Naive thymus-derived CD4-positive, alpha-beta T cell (primary cell): ENCODE measurements at regions of chr7 and their contacts with region 1.

Region 1: DNA sequence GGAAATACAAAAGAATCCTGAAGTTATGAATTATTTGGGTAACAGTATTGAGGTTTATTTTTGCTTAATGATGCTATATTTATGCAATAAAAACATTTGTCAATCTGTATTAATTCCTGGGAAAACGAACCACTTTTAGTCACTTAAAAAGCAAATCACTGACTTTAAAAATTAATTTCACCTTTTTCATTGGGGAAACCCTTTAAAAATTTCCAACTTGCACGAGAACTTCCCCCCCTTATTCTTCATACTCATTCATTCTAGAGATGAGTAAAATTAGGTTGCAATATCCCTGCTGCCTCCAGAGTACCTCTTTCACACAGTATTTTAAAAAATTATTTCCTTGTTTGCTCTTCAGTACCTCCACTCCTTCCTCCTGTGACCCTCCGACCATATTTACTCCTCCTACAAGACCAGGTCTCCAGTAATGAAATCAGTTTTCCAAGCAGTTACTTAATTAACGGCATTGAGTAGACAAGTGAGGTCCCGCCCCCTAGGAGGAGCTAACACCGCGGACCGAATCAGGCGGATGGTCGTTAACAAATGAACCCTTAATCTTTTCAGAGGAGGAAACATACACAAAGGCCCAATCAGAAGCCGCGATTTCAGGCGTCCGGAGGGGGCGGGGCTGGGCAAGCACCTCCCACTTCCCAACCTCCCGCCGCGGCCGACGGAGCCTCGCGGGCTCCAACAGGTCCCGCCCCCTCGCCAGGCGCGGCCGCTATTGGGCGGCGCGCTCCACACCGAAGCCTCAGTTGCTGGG is 465 bp upstream of the TRIM24 start:
- DNase-seq: peak; percentile 95 to 99 (median 98)
- ATAC-seq: peak; percentile 92
- H3K4me3 ChIP-seq: peak overlapping the region; percentile 35
- H3K4me3 Mint-ChIP-seq: peak overlapping the region; percentile 78 to 96 (median 87)
- H3K27ac ChIP-seq: peak overlapping the region; percentile 34
- H3K27ac Mint-ChIP-seq: peak overlapping the region; percentile 0 to 83 (median 61)
- H3K4me1 ChIP-seq: peaks cover 6 to 9% of the 10 kb centered on the region in 2 donors
- H3K4me1 Mint-ChIP-seq: peaks cover 14 to 38% (median 31%) of the 10 kb centered on the region in 7 donors
- H3K27me3 ChIP-seq: no peaks in the 10 kb centered on the region
- H3K27me3 Mint-ChIP-seq: peaks cover 0 to 2% (median 0%) of the 10 kb centered on the region in 5 donors

Region 2: GRCh38 chr7:137898839-137899721 is 560.5 kb before region 1 on chr7:
- CTCF ChIA-PET with region 1: no interaction called
- POLR2A ChIA-PET with region 1: no interaction called
- intact Hi-C with region 1: loop called in 1 of 2 experiments (anchors 5 kb)
- DNase-seq: peak; percentile 46 to 81 (median 68)
- ATAC-seq: peak; percentile 92
- H3K4me3 ChIP-seq: no peak overlapping the region
- H3K4me3 Mint-ChIP-seq: peak overlapping the region; percentile 51 to 82 (median 66)
- H3K27ac ChIP-seq: no peak overlapping the region
- H3K27ac Mint-ChIP-seq: peak overlapping the region in 8 of 9 donors; percentile 19 to 72 (median 62)
- H3K4me1 ChIP-seq: peaks cover 0 to 6% of the 10 kb centered on the region in 2 donors
- H3K4me1 Mint-ChIP-seq: peaks cover 10 to 36% (median 16%) of the 10 kb centered on the region in 7 donors
- H3K27me3 ChIP-seq: no peaks in the 10 kb centered on the region
- H3K27me3 Mint-ChIP-seq: no peaks in the 10 kb centered on the region

Region 3: DNA sequence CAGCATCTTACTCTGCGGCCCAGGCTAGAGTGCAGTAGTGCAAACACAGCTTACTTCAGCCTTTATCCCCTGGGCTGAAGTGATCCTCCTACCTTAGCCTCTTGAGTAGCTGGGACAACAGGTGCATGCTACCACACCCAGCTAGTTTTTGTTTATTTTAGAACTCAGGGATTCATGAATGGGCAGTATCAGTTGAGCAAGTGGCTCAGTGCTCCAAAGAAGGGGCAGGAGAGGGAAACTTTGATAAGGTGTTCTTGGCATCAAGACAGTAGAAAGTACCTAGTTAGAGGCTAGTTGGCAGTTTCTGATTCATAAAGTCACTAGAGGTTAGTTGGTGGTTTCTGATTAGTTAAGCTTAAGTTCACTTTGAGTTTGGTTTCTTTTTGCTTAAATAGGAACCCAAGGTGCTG is 18.9 kb after region 1 on chr7:
- CTCF ChIA-PET with region 1: no interaction called
- POLR2A ChIA-PET with region 1: interaction called, 3 read pairs
- intact Hi-C with region 1: loop called (anchors 2 kb)
- DNase-seq: no peak
- ATAC-seq: peak; percentile 26
- H3K4me3 ChIP-seq: no peak overlapping the region
- H3K4me3 Mint-ChIP-seq: peak overlapping the region in 3 of 10 donors; percentile 14 to 56 (median 26)
- H3K27ac ChIP-seq: no peak overlapping the region
- H3K27ac Mint-ChIP-seq: peak overlapping the region in 1 of 9 donors; percentile 63
- H3K4me1 ChIP-seq: peaks cover 9 to 11% of the 10 kb centered on the region in 2 donors
- H3K4me1 Mint-ChIP-seq: peaks cover 40 to 85% (median 76%) of the 10 kb centered on the region in 7 donors
- H3K27me3 ChIP-seq: no peaks in the 10 kb centered on the region
- H3K27me3 Mint-ChIP-seq: no peaks in the 10 kb centered on the region

Region 4: GRCh38 chr7:138556771-138557484 is 97.3 kb after region 1 on chr7:
- CTCF ChIA-PET with region 1: no interaction called
- POLR2A ChIA-PET with region 1: no interaction called
- intact Hi-C with region 1: loop called in 1 of 2 experiments (anchors 10 kb)
- DNase-seq: no peak
- ATAC-seq: no peak
- H3K4me3 ChIP-seq: no peak overlapping the region
- H3K4me3 Mint-ChIP-seq: no peak overlapping the region
- H3K27ac ChIP-seq: no peak overlapping the region
- H3K27ac Mint-ChIP-seq: no peak overlapping the region
- H3K4me1 ChIP-seq: no peaks in the 10 kb centered on the region
- H3K4me1 Mint-ChIP-seq: no peaks in the 10 kb centered on the region
- H3K27me3 ChIP-seq: no peaks in the 10 kb centered on the region
- H3K27me3 Mint-ChIP-seq: no peaks in the 10 kb centered on the region

Region 5: GRCh38 chr7:138738551-138739335 is 279.1 kb after region 1 on chr7:
- CTCF ChIA-PET with region 1: interaction called, 6 read pairs
- POLR2A ChIA-PET with region 1: interaction called, 4 read pairs
- intact Hi-C with region 1: loop called (anchors 1 to 2 kb)
- DNase-seq: peak; percentile 70 to 86 (median 80)
- ATAC-seq: peak; percentile 92
- H3K4me3 ChIP-seq: no peak overlapping the region
- H3K4me3 Mint-ChIP-seq: no peak overlapping the region
- H3K27ac ChIP-seq: no peak overlapping the region
- H3K27ac Mint-ChIP-seq: peak overlapping the region in 7 of 9 donors; percentile 1 to 83 (median 65)
- H3K4me1 ChIP-seq: no peaks in the 10 kb centered on the region
- H3K4me1 Mint-ChIP-seq: peaks cover 0 to 7% (median 4%) of the 10 kb centered on the region in 7 donors
- H3K27me3 ChIP-seq: no peaks in the 10 kb centered on the region
- H3K27me3 Mint-ChIP-seq: no peaks in the 10 kb centered on the region

Region 6: DNA sequence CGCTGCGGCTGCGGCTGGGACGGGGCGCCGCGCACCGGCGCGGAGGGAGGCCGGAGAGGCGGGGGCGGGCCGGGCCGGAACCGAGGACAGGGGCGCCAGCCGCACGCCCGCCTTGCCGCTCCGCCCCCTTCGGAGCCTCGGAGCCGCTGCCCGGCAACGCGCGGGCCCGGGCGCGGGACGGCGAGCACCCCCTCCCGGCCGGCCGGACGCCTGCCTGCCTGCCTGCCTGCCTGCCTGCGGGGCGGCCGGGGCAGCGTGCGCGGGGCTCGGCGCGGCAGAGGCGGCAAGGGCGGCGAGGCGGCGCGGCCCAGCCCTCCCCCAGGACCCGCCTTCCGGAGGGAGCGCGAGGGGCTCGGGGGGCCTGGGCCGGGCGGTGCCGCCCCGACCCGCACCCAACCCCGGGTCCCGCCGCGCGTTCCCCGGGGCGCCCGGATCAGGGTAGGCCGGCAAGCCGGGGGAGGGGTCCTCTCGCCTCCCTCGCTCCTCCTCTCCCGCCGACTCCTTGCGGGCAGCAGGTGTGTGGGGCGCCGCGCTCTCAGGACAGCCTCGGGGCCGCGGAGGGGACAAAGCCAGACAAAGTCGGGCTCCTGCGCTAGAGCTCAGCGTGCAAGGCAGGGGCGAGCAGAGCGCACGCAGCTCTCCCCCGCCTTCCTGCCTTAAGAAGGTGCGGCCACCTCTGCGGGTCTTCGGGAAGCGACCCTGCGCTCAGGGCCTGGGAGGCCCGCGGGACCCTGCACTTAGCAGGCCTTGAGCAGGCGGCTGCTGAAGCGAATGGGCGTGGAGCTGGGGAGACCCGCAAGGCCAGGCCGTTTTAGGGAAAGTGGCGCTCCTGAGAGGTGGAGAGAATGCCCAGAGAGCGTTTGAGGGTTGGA is 522.0 kb after region 1 on chr7 and contains the start of gene KIAA1549:
- CTCF ChIA-PET with region 1: no interaction called
- POLR2A ChIA-PET with region 1: no interaction called
- intact Hi-C with region 1: loop called in 1 of 2 experiments (anchors 2 kb)
- DNase-seq: peak in 8 of 9 donors; percentile 17 to 75 (median 26)
- ATAC-seq: peak; percentile 81
- H3K4me3 ChIP-seq: peak within 1 kb of the TSS; percentile 37
- H3K4me3 Mint-ChIP-seq: peak within 1 kb of the TSS; percentile 83 to 98 (median 90)
- H3K27ac ChIP-seq: no peak within 1 kb of the TSS
- H3K27ac Mint-ChIP-seq: peak within 1 kb of the TSS in 7 of 9 donors; percentile 12 to 82 (median 63)
- H3K4me1 ChIP-seq: peaks cover 5 to 6% of the 10 kb centered on the region in 2 donors
- H3K4me1 Mint-ChIP-seq: peaks cover 10 to 18% (median 13%) of the 10 kb centered on the region in 7 donors
- H3K27me3 ChIP-seq: peaks cover 10 to 13% of the 10 kb centered on the region in 2 donors
- H3K27me3 Mint-ChIP-seq: peaks cover 25 to 49% (median 35%) of the 10 kb centered on the region in 5 donors
- total RNA-seq, gene KIAA1549: 0.16 to 0.56 (median 0.25) TPM in 4 of 5 experiments, not detected in the other

Region 7: GRCh38 chr7:139359366-139360209 is 900.0 kb after region 1 on chr7 and contains the start of gene LUC7L2:
- CTCF ChIA-PET with region 1: no interaction called
- POLR2A ChIA-PET with region 1: no interaction called
- intact Hi-C with region 1: loop called (anchors 1 kb)
- DNase-seq: peak; percentile 96 to 100 (median 99)
- ATAC-seq: peak; percentile 91
- H3K4me3 ChIP-seq: peak within 1 kb of the TSS; percentile 80
- H3K4me3 Mint-ChIP-seq: peak within 1 kb of the TSS; percentile 93 to 100 (median 99)
- H3K27ac ChIP-seq: peak within 1 kb of the TSS; percentile 97
- H3K27ac Mint-ChIP-seq: peak within 1 kb of the TSS; percentile 95 to 100 (median 98)
- H3K4me1 ChIP-seq: peaks cover 10 to 27% of the 10 kb centered on the region in 2 donors
- H3K4me1 Mint-ChIP-seq: peaks cover 21 to 60% (median 45%) of the 10 kb centered on the region in 7 donors
- H3K27me3 ChIP-seq: no peaks in the 10 kb centered on the region
- H3K27me3 Mint-ChIP-seq: no peaks in the 10 kb centered on the region
- total RNA-seq, gene LUC7L2: 116 to 183 (median 150) TPM